Activated T-helper 2 cell treated with anti-CD3 and anti-CD28 coated beads, Interferon-gamma antibody, Interleukin-2, Interleukin-4, amounts not matched to agents 10 μg/mL and 5 μg/mL and 100 μg/mL, durations not matched to agents 14 hours and 24 hours and 36 hours (primary cell): ENCODE measurements at regions of chr2 and their contacts with region 1.

Region 1: GRCh38 chr2:201432038-201432620 is 19.1 kb downstream of the TRAK2 start:
- DNase-seq: no peak
- H3K4me3 Mint-ChIP-seq: peak overlapping the region; percentile 52
- H3K27ac Mint-ChIP-seq: peak overlapping the region; percentile 83
- H3K4me1 Mint-ChIP-seq: peaks cover 34% of the 10 kb centered on the region
- H3K27me3 Mint-ChIP-seq: no peaks in the 10 kb centered on the region

Region 2: DNA sequence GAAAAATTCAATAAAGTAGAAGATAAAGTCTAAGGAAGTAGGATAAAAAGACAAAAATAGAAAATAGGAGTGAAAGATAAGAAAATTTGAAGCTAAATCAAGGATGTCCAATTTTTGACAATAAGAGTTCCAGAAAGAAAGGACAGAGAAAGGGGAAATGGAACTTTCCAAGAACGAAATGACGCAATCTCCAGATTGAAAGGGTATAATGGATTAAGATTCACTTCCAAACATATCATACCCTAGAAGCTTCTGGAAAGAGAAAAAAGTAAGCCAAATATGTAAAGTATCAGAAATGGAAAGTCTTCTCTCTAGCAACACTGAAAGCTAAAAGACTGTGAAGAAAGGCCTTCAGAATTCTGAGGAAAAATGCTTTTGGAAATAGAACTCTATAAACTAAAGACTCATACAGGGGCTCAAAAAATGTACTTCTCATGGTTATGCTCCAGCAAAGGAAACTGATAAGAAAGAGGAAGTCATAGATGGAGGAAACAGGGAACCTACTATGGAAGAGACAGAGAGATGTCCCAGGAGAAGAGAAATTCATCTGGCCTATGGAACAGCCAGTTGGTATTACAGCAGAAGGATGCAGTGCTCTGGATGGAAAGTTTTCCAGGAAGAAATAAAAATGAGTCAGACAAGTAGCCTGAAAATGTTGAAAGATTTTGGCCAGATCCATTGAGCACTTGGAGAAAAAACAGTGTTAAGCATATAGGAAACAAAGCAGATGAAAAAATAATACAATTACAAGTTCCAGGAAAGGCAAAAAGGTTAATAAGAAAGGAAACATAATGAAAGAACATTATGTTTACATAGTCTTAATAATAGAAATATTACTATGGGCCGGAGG is 151.7 kb before region 1 on chr2:
- intact Hi-C with region 1: no loop called
- DNase-seq: no peak
- H3K4me3 Mint-ChIP-seq: no peak overlapping the region
- H3K27ac Mint-ChIP-seq: peak overlapping the region; percentile 34
- H3K4me1 Mint-ChIP-seq: peaks cover 9% of the 10 kb centered on the region
- H3K27me3 Mint-ChIP-seq: no peaks in the 10 kb centered on the region

Region 3: GRCh38 chr2:201414099-201415023 is 17.8 kb before region 1 on chr2:
- intact Hi-C with region 1: loop called (anchors 2 kb)
- DNase-seq: no peak
- H3K4me3 Mint-ChIP-seq: no peak overlapping the region
- H3K27ac Mint-ChIP-seq: no peak overlapping the region
- H3K4me1 Mint-ChIP-seq: peaks cover 13% of the 10 kb centered on the region
- H3K27me3 Mint-ChIP-seq: no peaks in the 10 kb centered on the region

Region 4: DNA sequence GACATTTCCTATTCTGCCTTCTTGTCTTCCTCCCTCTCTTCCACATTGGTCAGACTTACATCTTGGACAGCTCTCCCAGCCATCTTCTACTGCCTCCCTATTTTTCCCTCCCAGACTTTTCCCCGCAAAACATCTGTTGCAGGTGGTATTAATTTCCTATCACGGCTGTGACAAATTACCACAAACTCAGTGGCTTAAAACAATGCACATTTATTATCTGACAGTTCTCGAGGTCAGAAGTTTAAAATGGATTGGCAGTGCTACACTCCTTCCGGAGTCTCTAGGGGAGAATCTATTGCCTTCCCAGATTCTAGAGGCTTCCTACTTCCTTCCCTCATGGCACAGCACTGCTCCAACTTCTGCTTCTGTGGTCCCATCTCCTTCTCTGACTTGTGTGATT is 52.7 kb after region 1 on chr2:
- intact Hi-C with region 1: no loop called
- DNase-seq: no peak
- H3K4me3 Mint-ChIP-seq: no peak overlapping the region
- H3K27ac Mint-ChIP-seq: no peak overlapping the region
- H3K4me1 Mint-ChIP-seq: no peaks in the 10 kb centered on the region
- H3K27me3 Mint-ChIP-seq: peaks cover 16% of the 10 kb centered on the region